ENCODE measurements at regions of chr3 and their contacts with region 1.

Region 1: DNA sequence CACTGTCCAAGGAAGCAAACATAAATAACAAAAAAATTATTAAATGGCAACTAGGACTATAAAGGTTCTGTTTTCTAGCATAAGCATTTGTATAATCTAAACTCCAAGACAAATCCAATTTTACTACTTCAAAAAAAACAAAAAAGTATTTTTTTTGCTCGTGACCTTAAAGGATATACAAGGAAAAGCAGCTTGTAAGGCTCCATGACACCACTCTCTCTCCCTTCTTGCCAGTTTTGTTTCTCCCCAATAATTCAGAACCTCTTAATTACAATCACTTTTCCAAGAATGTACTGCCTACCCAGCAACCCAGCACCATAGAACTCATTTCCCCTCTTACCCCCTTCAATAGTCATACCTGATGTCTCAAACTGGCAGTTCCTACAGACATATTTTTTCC is 496.2 kb downstream of the GRM7 start:
- DNase-seq: no peak
- ATAC-seq: no peak
- H3K4me3 ChIP-seq: no peak overlapping the region
- H3K27ac ChIP-seq: no peak overlapping the region
- H3K4me1 ChIP-seq: no peaks in the 10 kb centered on the region
- H3K27me3 ChIP-seq: no peaks in the 10 kb centered on the region
- CTCF ChIP-seq: no peak
- POLR2A ChIP-seq: no peak
- RAD21 ChIP-seq: no peak

Region 2: GRCh38 chr3:7309641-7310102 is 47.4 kb before region 1 on chr3:
- CTCF ChIA-PET with region 1: no interaction called
- POLR2A ChIA-PET with region 1: no interaction called
- dilution Hi-C with region 1: no loop called
- in situ Hi-C with region 1: no loop called
- intact Hi-C with region 1: no loop called
- DNase-seq: no peak
- ATAC-seq: no peak
- H3K4me3 ChIP-seq: no peak overlapping the region
- H3K27ac ChIP-seq: no peak overlapping the region
- H3K4me1 ChIP-seq: no peaks in the 10 kb centered on the region
- H3K27me3 ChIP-seq: no peaks in the 10 kb centered on the region
- CTCF ChIP-seq: no peak
- POLR2A ChIP-seq: no peak
- RAD21 ChIP-seq: no peak

Region 3: GRCh38 chr3:7407107-7407506 is 50.0 kb after region 1 on chr3:
- CTCF ChIA-PET with region 1: no interaction called
- POLR2A ChIA-PET with region 1: no interaction called
- dilution Hi-C with region 1: no loop called
- in situ Hi-C with region 1: no loop called
- intact Hi-C with region 1: loop called (anchors 1 kb)
- DNase-seq: no peak
- ATAC-seq: no peak
- H3K4me3 ChIP-seq: no peak overlapping the region
- H3K27ac ChIP-seq: no peak overlapping the region
- H3K4me1 ChIP-seq: no peaks in the 10 kb centered on the region
- H3K27me3 ChIP-seq: no peaks in the 10 kb centered on the region
- CTCF ChIP-seq: no peak
- POLR2A ChIP-seq: no peak
- RAD21 ChIP-seq: no peak

Region 4: GRCh38 chr3:7484636-7485035 is 127.5 kb after region 1 on chr3:
- CTCF ChIA-PET with region 1: no interaction called
- POLR2A ChIA-PET with region 1: no interaction called
- dilution Hi-C with region 1: no loop called
- in situ Hi-C with region 1: no loop called
- intact Hi-C with region 1: no loop called
- DNase-seq: no peak
- ATAC-seq: no peak
- H3K4me3 ChIP-seq: no peak overlapping the region
- H3K27ac ChIP-seq: no peak overlapping the region
- H3K4me1 ChIP-seq: no peaks in the 10 kb centered on the region
- H3K27me3 ChIP-seq: no peaks in the 10 kb centered on the region
- CTCF ChIP-seq: no peak
- POLR2A ChIP-seq: no peak
- RAD21 ChIP-seq: no peak

Measured in IMR-90 (cell line).